ENCODE measurements at regions of chr13 and their contacts with region 1.

Region 1: DNA sequence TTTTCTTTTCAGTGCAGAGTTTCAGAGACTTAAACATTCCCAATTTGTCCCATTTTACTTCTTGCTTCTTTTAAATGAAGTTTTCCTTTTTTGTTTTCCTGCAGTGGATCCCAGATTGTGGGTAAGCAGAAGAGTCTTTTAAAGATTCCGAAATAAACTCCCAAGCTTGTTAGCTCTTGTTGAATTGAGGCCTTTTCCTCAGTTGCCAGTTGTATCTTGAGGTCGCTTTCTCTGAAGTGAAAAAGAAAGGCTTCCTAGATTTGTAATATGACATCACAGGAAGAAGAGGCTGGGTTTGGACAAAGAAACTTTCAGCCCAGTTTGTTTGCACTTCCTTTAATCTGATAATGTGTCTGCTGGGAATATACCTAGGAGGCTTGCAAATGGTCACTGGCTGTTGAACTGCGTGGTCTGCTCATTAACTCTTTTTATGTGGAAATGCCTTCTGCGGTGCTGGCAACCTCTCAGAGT is at the start of gene LPAR6:
- DNase-seq: peak; percentile 95
- ATAC-seq: peak; percentile 98
- H3K4me3 ChIP-seq: peak within 1 kb of the TSS; percentile 72 to 88 (median 87)
- H3K27ac ChIP-seq: peak within 1 kb of the TSS; percentile 88
- H3K4me1 ChIP-seq: peaks cover 23% of the 10 kb centered on the region
- H3K27me3 ChIP-seq: no peaks in the 10 kb centered on the region; a peak in 1 of 5 replicates
- CTCF ChIP-seq: no peak
- EP300 ChIP-seq: peak in 1 of 2 experiments; percentile 87; a peak in 2 of 4 replicates
- POLR2A ChIP-seq: peak; percentile 61 to 66; a peak in 3 of 4 replicates
- RAD21 ChIP-seq: no peak
- total RNA-seq, gene LPAR6: 17.9 and 24.4 TPM in 2 replicates

Region 2: DNA sequence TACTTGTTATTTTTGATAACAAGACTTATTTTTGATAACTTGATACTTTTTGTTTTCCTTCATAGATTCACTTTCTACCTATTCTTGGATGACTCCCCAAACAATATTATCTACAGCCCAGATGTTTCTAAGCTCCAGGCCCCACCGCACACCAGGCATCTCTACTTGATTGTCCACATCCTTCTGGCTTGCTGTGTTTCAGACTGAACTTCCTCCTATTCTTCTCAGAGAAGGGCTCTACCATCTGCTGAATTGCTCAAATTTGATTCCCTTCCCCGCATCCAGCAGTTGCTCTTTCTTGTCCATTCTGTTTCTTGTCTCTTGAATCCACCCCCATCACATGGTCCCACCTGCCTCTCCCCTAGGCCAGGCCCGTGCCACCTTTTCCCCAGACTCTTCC is 362.4 kb before region 1 on chr13:
- CTCF ChIA-PET with region 1: no interaction called
- POLR2A ChIA-PET with region 1: no interaction called
- in situ Hi-C with region 1: no loop called
- intact Hi-C with region 1: no loop called
- DNase-seq: no peak
- ATAC-seq: no peak
- H3K4me3 ChIP-seq: no peak overlapping the region
- H3K27ac ChIP-seq: no peak overlapping the region
- H3K4me1 ChIP-seq: peaks cover 5% of the 10 kb centered on the region; the same call in 1 of the 2 replicates
- H3K27me3 ChIP-seq: no peaks in the 10 kb centered on the region
- CTCF ChIP-seq: no peak
- EP300 ChIP-seq: no peak
- POLR2A ChIP-seq: no peak
- RAD21 ChIP-seq: no peak

Region 3: GRCh38 chr13:48532506-48533499 is 119.9 kb after region 1 on chr13 and contains the start of gene RCBTB2:
- CTCF ChIA-PET with region 1: no interaction called
- POLR2A ChIA-PET with region 1: interaction called, 6 read pairs
- in situ Hi-C with region 1: no loop called
- intact Hi-C with region 1: loop called (anchors 1 kb)
- DNase-seq: peak; percentile 93
- ATAC-seq: peak; percentile 94
- H3K4me3 ChIP-seq: peak within 1 kb of the TSS; percentile 83 to 95 (median 92)
- H3K27ac ChIP-seq: peak within 1 kb of the TSS; percentile 72
- H3K4me1 ChIP-seq: peaks cover 32% of the 10 kb centered on the region
- H3K27me3 ChIP-seq: no peaks in the 10 kb centered on the region; a peak in 1 of 5 replicates
- CTCF ChIP-seq: peak; percentile 17; the same call in 1 of the 2 replicates
- EP300 ChIP-seq: no peak
- POLR2A ChIP-seq: peak; percentile 85 to 88
- RAD21 ChIP-seq: 0 out of 2 replicates have a peak, but pooled peaks have one; percentile 9
- total RNA-seq, gene RCBTB2: 1.9 and 3.0 TPM in 2 replicates

Measured in HepG2 (cell line).